CD8-positive, alpha-beta memory T cell (primary cell): ENCODE measurements at regions of chr17 and their contacts with region 1.

Region 1: GRCh38 chr17:39153599-39154051 is 2.2 kb upstream of the PLXDC1 start:
- DNase-seq: peak; percentile 86 to 97 (median 88)
- H3K4me3 ChIP-seq: peak overlapping the region; percentile 87
- H3K4me3 Mint-ChIP-seq: peak overlapping the region; percentile 94 to 100 (median 99)
- H3K27ac ChIP-seq: peak overlapping the region; percentile 67
- H3K27ac Mint-ChIP-seq: peak overlapping the region; percentile 89 to 99 (median 96)
- H3K4me1 ChIP-seq: peaks cover 8% of the 10 kb centered on the region
- H3K4me1 Mint-ChIP-seq: peaks cover 47 to 52% (median 48%) of the 10 kb centered on the region in 3 donors
- H3K27me3 ChIP-seq: no peaks in the 10 kb centered on the region
- H3K27me3 Mint-ChIP-seq: peaks cover 0 to 30% of the 10 kb centered on the region in 2 donors

Region 2: GRCh38 chr17:38922538-38923297 is 230.9 kb before region 1 on chr17:
- CTCF ChIA-PET with region 1: interaction called, 16 read pairs
- POLR2A ChIA-PET with region 1: no interaction called
- DNase-seq: no peak
- H3K4me3 ChIP-seq: no peak overlapping the region
- H3K4me3 Mint-ChIP-seq: no peak overlapping the region
- H3K27ac ChIP-seq: no peak overlapping the region
- H3K27ac Mint-ChIP-seq: peak overlapping the region in 3 of 8 donors; percentile 15 to 35 (median 30)
- H3K4me1 ChIP-seq: peaks cover 24% of the 10 kb centered on the region
- H3K4me1 Mint-ChIP-seq: peaks cover 35 to 48% (median 36%) of the 10 kb centered on the region in 3 donors
- H3K27me3 ChIP-seq: no peaks in the 10 kb centered on the region
- H3K27me3 Mint-ChIP-seq: peaks cover 0 to 2% of the 10 kb centered on the region in 2 donors

Region 3: GRCh38 chr17:39057701-39058206 is 95.9 kb before region 1 on chr17:
- CTCF ChIA-PET with region 1: interaction called, 55 read pairs
- POLR2A ChIA-PET with region 1: interaction called, 13 read pairs
- DNase-seq: no peak
- H3K4me3 ChIP-seq: peak overlapping the region; percentile 72
- H3K4me3 Mint-ChIP-seq: peak overlapping the region in 6 of 7 donors; percentile 48 to 90 (median 78)
- H3K27ac ChIP-seq: no peak overlapping the region
- H3K27ac Mint-ChIP-seq: peak overlapping the region in 3 of 8 donors; percentile 3 to 91 (median 43)
- H3K4me1 ChIP-seq: peaks cover 7% of the 10 kb centered on the region
- H3K4me1 Mint-ChIP-seq: peaks cover 4 to 16% (median 11%) of the 10 kb centered on the region in 3 donors
- H3K27me3 ChIP-seq: no peaks in the 10 kb centered on the region
- H3K27me3 Mint-ChIP-seq: peaks cover under 1% of the 10 kb centered on the region in 2 donors

Region 4: GRCh38 chr17:39092692-39093230 is 60.9 kb before region 1 on chr17:
- CTCF ChIA-PET with region 1: interaction called, 68 read pairs
- POLR2A ChIA-PET with region 1: interaction called, 13 read pairs
- DNase-seq: peak in 2 of 5 donors; percentile 21 to 61
- H3K4me3 ChIP-seq: peak overlapping the region; percentile 49
- H3K4me3 Mint-ChIP-seq: peak overlapping the region; percentile 77 to 93 (median 82)
- H3K27ac ChIP-seq: no peak overlapping the region
- H3K27ac Mint-ChIP-seq: peak overlapping the region; percentile 88 to 99 (median 94)
- H3K4me1 ChIP-seq: peaks cover 86% of the 10 kb centered on the region
- H3K4me1 Mint-ChIP-seq: peaks cover 62 to 78% (median 70%) of the 10 kb centered on the region in 3 donors
- H3K27me3 ChIP-seq: no peaks in the 10 kb centered on the region
- H3K27me3 Mint-ChIP-seq: no peaks in the 10 kb centered on the region

Region 5: GRCh38 chr17:39164675-39165143 is 11.1 kb after region 1 on chr17:
- CTCF ChIA-PET with region 1: interaction called, 121 read pairs
- POLR2A ChIA-PET with region 1: interaction called, 18 read pairs
- DNase-seq: peak; percentile 62 to 85 (median 79)
- H3K4me3 ChIP-seq: peak overlapping the region; percentile 92
- H3K4me3 Mint-ChIP-seq: peak overlapping the region; percentile 91 to 98 (median 94)
- H3K27ac ChIP-seq: no peak overlapping the region
- H3K27ac Mint-ChIP-seq: peak overlapping the region in 7 of 8 donors; percentile 19 to 98 (median 82)
- H3K4me1 ChIP-seq: peaks cover 16% of the 10 kb centered on the region
- H3K4me1 Mint-ChIP-seq: peaks cover 31 to 41% (median 32%) of the 10 kb centered on the region in 3 donors
- H3K27me3 ChIP-seq: no peaks in the 10 kb centered on the region
- H3K27me3 Mint-ChIP-seq: peaks cover 0 to 3% of the 10 kb centered on the region in 2 donors

Region 6: GRCh38 chr17:39199820-39200069 is 46.1 kb after region 1 on chr17:
- CTCF ChIA-PET with region 1: interaction called, 10 read pairs
- POLR2A ChIA-PET with region 1: interaction called, 12 read pairs
- DNase-seq: peak; percentile 81 to 94 (median 90)
- H3K4me3 ChIP-seq: peak overlapping the region; percentile 94
- H3K4me3 Mint-ChIP-seq: peak overlapping the region; percentile 92 to 99 (median 94)
- H3K27ac ChIP-seq: peak overlapping the region; percentile 99
- H3K27ac Mint-ChIP-seq: peak overlapping the region; percentile 97 to 100 (median 100)
- H3K4me1 ChIP-seq: peaks cover 54% of the 10 kb centered on the region
- H3K4me1 Mint-ChIP-seq: peaks cover 50 to 76% (median 58%) of the 10 kb centered on the region in 3 donors
- H3K27me3 ChIP-seq: no peaks in the 10 kb centered on the region
- H3K27me3 Mint-ChIP-seq: peaks cover 0 to 4% of the 10 kb centered on the region in 2 donors

Region 7: GRCh38 chr17:39244600-39245570 is 91.3 kb after region 1 on chr17:
- CTCF ChIA-PET with region 1: interaction called, 10 read pairs
- POLR2A ChIA-PET with region 1: no interaction called
- DNase-seq: peak; percentile 72 to 88 (median 81)
- H3K4me3 ChIP-seq: no peak overlapping the region
- H3K4me3 Mint-ChIP-seq: peak overlapping the region in 4 of 7 donors; percentile 41 to 55 (median 46)
- H3K27ac ChIP-seq: no peak overlapping the region
- H3K27ac Mint-ChIP-seq: peak overlapping the region in 7 of 8 donors; percentile 38 to 90 (median 54)
- H3K4me1 ChIP-seq: peaks cover 9% of the 10 kb centered on the region
- H3K4me1 Mint-ChIP-seq: peaks cover 9 to 14% (median 11%) of the 10 kb centered on the region in 3 donors
- H3K27me3 ChIP-seq: no peaks in the 10 kb centered on the region
- H3K27me3 Mint-ChIP-seq: peaks cover 2 to 7% of the 10 kb centered on the region in 2 donors